ENCODE measurements at regions of chr10 and their contacts with region 1.

Region 1: GRCh38 chr10:11684717-11685645 is 57.2 kb upstream of the ECHDC3 start:
- DNase-seq: peak; percentile 89
- H3K4me3 ChIP-seq: peak overlapping the region in 2 of 3 experiments; percentile 6 to 47
- H3K27ac ChIP-seq: peak overlapping the region; percentile 98
- H3K4me1 ChIP-seq: peaks cover 35% of the 10 kb centered on the region
- H3K27me3 ChIP-seq: no peaks in the 10 kb centered on the region
- CTCF ChIP-seq: no peak
- POLR2A ChIP-seq: no peak

Region 2: DNA sequence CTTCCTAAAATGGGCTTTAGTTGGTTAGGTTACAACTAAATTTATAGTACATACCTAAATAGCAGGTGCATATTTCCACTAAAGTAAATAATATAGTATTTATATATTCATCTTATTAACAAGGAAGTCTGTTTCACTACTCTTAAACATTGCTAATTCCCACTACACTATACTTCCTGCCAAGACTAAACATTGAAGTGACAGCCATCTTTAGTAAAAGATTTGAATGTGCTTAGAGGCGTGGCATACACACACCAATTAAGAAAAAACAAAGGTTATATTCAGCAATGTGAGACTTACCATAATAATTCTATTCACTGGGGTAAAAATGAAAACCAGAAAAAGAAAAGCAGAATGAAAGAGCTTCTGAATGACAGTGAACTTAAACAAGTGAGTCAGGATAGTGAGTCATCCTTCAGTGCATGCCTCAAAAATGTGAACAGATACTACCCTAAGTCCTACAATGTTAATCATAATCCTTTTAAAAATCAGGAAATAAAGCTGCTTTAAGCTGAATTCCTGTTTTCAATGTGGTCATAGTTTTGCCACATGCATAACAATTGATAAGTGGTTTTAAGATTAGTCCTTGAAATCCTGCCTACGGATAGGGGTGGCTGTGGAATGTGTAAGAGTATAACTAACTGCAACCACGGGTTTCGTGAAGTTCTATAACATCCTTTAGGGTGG is 132.9 kb before region 1 on chr10:
- CTCF ChIA-PET with region 1: interaction called, 3 read pairs
- POLR2A ChIA-PET with region 1: no interaction called
- dilution Hi-C with region 1: no loop called
- intact Hi-C with region 1: loop called (anchors 1 kb)
- DNase-seq: peak; percentile 94
- H3K4me3 ChIP-seq: peak overlapping the region in 1 of 3 experiments; percentile 8
- H3K27ac ChIP-seq: peak overlapping the region; percentile 59
- H3K4me1 ChIP-seq: peaks cover 26% of the 10 kb centered on the region
- H3K27me3 ChIP-seq: no peaks in the 10 kb centered on the region
- CTCF ChIP-seq: no peak
- POLR2A ChIP-seq: no peak

Region 3: DNA sequence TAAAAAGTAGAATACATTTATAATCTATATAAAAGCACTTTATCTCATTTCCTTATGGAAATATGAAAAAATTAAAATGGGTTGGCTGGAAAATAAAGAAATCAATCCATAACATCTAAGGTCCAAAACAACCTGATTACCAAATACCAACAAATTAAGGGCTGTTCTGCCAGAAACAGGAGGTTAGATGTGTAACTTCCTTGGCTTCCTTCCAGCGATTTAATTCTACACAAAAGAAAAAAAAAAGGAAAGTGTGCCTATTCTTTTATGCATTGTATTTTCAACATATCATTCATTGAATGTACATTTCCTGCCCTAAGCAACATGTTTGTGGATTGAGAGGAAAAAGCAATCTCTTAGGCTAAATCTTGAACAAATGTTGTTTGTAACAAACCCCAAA is 37.3 kb before region 1 on chr10:
- CTCF ChIA-PET with region 1: interaction called, 4 read pairs
- POLR2A ChIA-PET with region 1: interaction called, 8 read pairs
- dilution Hi-C with region 1: no loop called
- intact Hi-C with region 1: loop called (anchors 2 kb)
- DNase-seq: peak; percentile 86
- H3K4me3 ChIP-seq: no peak overlapping the region
- H3K27ac ChIP-seq: peak overlapping the region; percentile 25
- H3K4me1 ChIP-seq: peaks cover 25% of the 10 kb centered on the region
- H3K27me3 ChIP-seq: no peaks in the 10 kb centered on the region
- CTCF ChIP-seq: no peak
- POLR2A ChIP-seq: no peak

Region 4: GRCh38 chr10:11673346-11674280 is 11.4 kb before region 1 on chr10:
- CTCF ChIA-PET with region 1: interaction called, 13 read pairs
- POLR2A ChIA-PET with region 1: interaction called, 3 read pairs
- dilution Hi-C with region 1: no loop called
- intact Hi-C with region 1: loop called (anchors 1 kb)
- DNase-seq: peak; percentile 94
- H3K4me3 ChIP-seq: no peak overlapping the region
- H3K27ac ChIP-seq: peak overlapping the region; percentile 46
- H3K4me1 ChIP-seq: peaks cover 21% of the 10 kb centered on the region
- H3K27me3 ChIP-seq: no peaks in the 10 kb centered on the region
- CTCF ChIP-seq: no peak
- POLR2A ChIP-seq: peak; percentile 57

Region 5: DNA sequence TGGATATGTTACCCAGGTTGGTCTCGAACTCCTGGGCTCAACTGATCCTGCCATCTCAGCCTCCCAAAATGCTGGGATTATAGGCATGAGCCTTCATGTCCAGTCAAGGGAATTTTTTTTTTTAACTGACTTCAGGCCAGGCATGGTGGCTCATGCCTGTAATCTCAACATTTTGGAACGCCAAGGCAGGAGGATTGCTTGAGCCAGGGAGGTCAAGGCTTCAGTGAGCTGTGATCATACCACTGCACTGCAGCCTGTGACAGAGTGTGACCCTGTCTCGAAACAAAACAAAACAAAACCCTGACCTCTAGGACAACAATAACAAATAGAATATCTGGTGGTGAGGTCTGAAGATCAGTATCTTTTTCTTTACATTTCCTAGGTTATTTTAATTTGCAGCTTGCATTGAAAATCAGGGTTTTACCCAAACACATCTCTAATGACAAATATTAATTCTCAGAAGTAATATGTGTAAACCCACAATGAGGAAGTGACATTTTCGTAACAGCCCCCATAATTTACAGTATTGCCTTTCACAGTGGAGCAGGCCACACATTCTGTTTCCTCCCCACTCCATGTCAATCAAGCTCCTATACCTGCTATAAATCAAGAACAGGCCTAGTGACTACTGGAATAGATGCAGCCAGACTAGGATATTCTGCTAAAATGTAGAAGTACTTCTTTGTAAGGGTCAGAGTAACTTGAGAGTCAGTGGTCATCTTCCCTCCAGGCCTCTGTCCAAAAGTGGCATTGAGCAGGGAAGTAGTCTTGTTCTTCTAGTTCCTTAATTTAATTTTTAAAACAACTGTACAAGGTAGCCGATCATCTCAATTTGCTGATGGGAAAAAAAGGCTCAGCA is 13.9 kb after region 1 on chr10:
- CTCF ChIA-PET with region 1: no interaction called
- POLR2A ChIA-PET with region 1: no interaction called
- dilution Hi-C with region 1: no loop called
- intact Hi-C with region 1: no loop called
- DNase-seq: no peak
- H3K4me3 ChIP-seq: no peak overlapping the region
- H3K27ac ChIP-seq: no peak overlapping the region
- H3K4me1 ChIP-seq: no peaks in the 10 kb centered on the region
- H3K27me3 ChIP-seq: no peaks in the 10 kb centered on the region
- CTCF ChIP-seq: no peak
- POLR2A ChIP-seq: no peak

Region 6: GRCh38 chr10:12165999-12166775 is 481.2 kb after region 1 on chr10:
- CTCF ChIA-PET with region 1: no interaction called
- POLR2A ChIA-PET with region 1: no interaction called
- dilution Hi-C with region 1: no loop called
- intact Hi-C with region 1: no loop called
- DNase-seq: no peak
- H3K4me3 ChIP-seq: no peak overlapping the region
- H3K27ac ChIP-seq: no peak overlapping the region
- H3K4me1 ChIP-seq: no peaks in the 10 kb centered on the region
- H3K27me3 ChIP-seq: no peaks in the 10 kb centered on the region
- CTCF ChIP-seq: no peak
- POLR2A ChIP-seq: no peak

Measured in endothelial cell of umbilical vein (primary cell).